Activated CD4-positive, alpha-beta memory T cell treated with anti-CD3 and anti-CD28 coated beads for 36 hours (primary cell): ENCODE measurements at regions of chr9 and their contacts with region 1.

Region 1: GRCh38 chr9:20319641-20320337 is 302.5 kb downstream of the MLLT3 start:
- DNase-seq: peak; percentile 48
- H3K4me3 Mint-ChIP-seq: no peak overlapping the region
- H3K27ac Mint-ChIP-seq: peak overlapping the region; percentile 63
- H3K4me1 Mint-ChIP-seq: peaks cover 80% of the 10 kb centered on the region
- H3K27me3 Mint-ChIP-seq: no peaks in the 10 kb centered on the region

Region 2: GRCh38 chr9:19976226-19976625 is 343.6 kb before region 1 on chr9:
- CTCF ChIA-PET with region 1: no interaction called
- POLR2A ChIA-PET with region 1: no interaction called
- intact Hi-C with region 1: loop called (anchors 2 kb)
- DNase-seq: peak; percentile 45
- H3K4me3 Mint-ChIP-seq: no peak overlapping the region
- H3K27ac Mint-ChIP-seq: peak overlapping the region; percentile 74
- H3K4me1 Mint-ChIP-seq: peaks cover 23% of the 10 kb centered on the region
- H3K27me3 Mint-ChIP-seq: no peaks in the 10 kb centered on the region

Region 3: DNA sequence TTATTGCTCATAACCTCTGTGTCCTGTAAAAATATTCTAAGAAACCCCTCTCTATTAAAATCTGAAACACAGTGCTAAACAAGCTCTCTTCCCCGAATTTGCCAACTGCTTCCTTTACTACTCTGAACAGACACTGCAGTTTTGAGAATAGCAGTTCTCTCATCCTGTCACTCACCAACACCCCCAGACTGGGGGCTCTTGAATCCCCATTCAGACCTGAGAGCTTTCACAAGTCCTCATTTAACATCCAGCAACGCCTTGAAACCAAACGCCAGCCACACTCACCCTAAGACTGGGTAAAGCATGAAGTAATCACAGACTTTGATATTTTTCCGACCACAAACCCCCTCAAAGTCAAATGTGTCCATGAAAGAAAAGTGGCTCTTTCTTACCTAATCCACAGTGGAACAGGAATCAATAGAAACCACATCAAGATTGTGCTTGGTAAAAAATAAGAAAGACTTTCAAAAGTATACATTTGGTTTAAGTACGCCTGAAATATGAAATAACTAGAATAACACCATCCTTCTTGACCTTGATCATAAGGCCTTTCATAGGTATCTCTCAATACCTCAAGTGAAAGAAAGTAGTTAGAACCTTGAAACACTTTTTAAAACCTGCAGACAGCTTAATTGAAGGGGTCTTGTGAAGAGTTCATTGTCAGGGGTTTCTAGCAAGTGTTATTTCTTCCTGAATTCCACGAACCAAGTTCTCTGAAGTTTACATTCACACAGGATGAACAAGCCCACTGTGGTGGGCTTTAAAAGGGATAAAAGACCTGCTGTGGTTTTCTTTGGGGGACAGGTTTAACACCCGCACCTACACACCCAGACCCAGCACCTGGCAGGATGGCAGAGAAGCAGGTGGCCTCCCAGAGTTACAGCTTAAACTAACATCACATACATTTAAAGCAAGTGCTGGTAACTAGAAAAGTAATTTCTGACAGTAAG is 110.1 kb before region 1 on chr9:
- CTCF ChIA-PET with region 1: interaction called, 4 read pairs
- POLR2A ChIA-PET with region 1: interaction called, 8 read pairs
- intact Hi-C with region 1: loop called (anchors 1 kb)
- DNase-seq: peak; percentile 79
- H3K4me3 Mint-ChIP-seq: no peak overlapping the region
- H3K27ac Mint-ChIP-seq: peak overlapping the region; percentile 89
- H3K4me1 Mint-ChIP-seq: peaks cover 33% of the 10 kb centered on the region
- H3K27me3 Mint-ChIP-seq: no peaks in the 10 kb centered on the region

Region 4: DNA sequence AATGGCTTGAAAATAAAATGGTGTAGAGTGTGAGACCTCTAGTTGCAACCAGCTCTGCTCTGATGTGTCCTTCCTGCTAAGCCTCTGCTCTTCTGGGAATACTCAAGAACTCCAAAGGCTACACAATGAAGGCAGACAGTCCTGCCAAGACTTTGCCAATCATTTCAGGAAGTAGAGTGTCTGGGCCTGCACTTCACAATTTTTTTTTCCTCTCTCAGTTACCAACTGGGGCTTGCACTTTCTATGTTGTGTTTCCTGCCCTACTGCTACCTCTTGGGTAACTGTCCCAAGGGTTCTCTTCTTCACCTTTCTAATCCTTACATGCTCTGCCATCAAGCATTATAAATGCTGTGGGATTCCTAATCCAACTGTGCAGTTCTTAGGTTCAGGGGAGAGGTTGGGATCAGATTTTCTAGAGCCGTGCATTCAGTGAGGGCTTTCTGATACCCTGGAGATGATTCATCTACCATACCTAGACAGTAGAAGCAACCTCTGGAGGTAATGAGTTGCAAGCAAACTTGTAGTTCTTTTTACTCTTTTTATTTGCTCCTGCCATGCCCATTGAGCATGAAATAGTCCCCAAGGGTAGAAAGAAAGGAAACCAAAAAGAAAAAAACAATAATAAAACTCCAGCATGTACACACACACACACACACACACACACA is 63.4 kb before region 1 on chr9:
- CTCF ChIA-PET with region 1: no interaction called
- POLR2A ChIA-PET with region 1: interaction called, 3 read pairs
- intact Hi-C with region 1: loop called (anchors 2 kb)
- DNase-seq: no peak
- H3K4me3 Mint-ChIP-seq: no peak overlapping the region
- H3K27ac Mint-ChIP-seq: no peak overlapping the region
- H3K4me1 Mint-ChIP-seq: peaks cover 32% of the 10 kb centered on the region
- H3K27me3 Mint-ChIP-seq: no peaks in the 10 kb centered on the region

Region 5: GRCh38 chr9:20558566-20559016 is 238.8 kb after region 1 on chr9:
- CTCF ChIA-PET with region 1: no interaction called
- POLR2A ChIA-PET with region 1: no interaction called
- intact Hi-C with region 1: loop called (anchors 2 kb)
- DNase-seq: peak; percentile 60
- H3K4me3 Mint-ChIP-seq: no peak overlapping the region
- H3K27ac Mint-ChIP-seq: peak overlapping the region; percentile 65
- H3K4me1 Mint-ChIP-seq: peaks cover 86% of the 10 kb centered on the region
- H3K27me3 Mint-ChIP-seq: no peaks in the 10 kb centered on the region